Activated T-helper 2 cell treated with anti-CD3 and anti-CD28 coated beads, Interferon-gamma antibody, Interleukin-2, Interleukin-4, amounts not matched to agents 10 μg/mL and 5 μg/mL and 100 μg/mL, durations not matched to agents 14 hours and 24 hours and 36 hours (primary cell): ENCODE measurements at regions of chr17 and their contacts with region 1.

Region 1: DNA sequence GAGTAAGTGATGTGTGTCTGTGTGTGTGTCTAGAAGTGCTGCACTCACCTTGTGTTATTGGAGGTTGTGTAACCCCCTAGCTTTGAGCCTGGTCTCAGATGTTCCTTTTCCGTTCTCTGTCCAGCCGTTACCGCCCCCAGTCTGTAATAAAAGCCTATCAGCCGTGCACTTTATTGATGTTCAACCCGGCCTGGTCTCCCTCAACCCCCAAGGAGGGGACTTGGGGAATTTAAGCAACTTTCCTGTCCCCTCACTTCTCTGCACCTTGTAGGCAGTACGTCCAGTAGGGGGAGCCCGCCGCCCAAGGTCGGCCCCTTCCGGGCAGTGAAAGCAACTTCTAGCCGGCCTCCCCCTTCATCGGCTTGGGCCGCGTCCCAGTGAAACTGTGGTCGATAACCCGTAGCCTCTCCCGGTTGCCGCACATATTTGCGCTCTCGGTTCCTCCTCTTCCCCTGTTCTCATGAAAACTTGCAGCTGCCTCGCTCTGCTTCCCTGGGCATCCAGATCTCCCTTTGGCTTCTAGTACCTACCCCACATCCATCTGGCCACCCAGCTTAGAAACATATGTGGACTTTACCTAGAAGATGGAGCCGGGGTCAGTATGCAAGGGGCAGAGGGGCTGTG is 7.9 kb downstream of the PNPO start:
- DNase-seq: peak; percentile 75
- H3K4me3 Mint-ChIP-seq: peak overlapping the region; percentile 61
- H3K27ac Mint-ChIP-seq: peak overlapping the region; percentile 73
- H3K4me1 Mint-ChIP-seq: peaks cover 30% of the 10 kb centered on the region
- H3K27me3 Mint-ChIP-seq: no peaks in the 10 kb centered on the region

Region 2: DNA sequence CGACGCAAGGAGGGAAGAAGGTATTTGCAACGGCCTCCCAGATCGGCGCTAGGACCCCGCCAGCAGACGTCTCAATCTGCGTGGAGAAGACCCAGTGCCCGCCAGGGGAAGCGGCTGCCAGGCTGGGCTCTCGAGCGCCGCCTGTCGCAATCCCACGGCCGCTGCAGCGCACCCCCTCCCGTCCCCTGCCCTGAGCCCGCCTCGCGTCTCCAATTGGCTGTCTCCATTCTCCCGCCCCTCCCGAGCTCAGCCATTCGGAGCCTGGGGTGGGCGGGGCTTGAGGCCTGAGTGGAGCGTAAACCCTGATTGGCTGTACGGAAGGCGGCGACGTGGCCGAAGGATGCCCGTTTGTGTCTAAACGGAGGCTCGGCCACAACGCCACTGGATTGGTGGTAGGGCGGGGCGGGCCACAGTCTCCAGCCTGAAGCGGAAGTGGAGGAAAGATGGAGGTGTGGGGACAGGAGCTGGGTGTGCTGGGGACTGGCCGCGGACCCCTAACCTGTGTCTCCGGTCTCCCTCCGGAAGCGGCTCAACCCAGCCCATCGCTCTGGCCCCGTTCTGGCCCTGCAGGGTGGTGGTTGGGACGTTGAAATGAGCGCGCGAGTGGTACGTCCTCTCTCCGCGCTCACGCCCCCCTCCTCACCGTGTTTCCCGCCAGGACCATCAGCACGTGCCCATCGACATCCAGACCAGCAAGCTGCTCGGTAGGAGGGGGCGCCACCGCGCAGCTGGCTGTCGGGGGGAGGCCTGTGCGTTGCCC is 21.6 kb after region 1 on chr17 and contains the start of gene CDK5RAP3:
- intact Hi-C with region 1: loop called (anchors 1 kb)
- DNase-seq: peak; percentile 99
- H3K4me3 Mint-ChIP-seq: peak within 1 kb of the TSS; percentile 95
- H3K27ac Mint-ChIP-seq: peak within 1 kb of the TSS; percentile 91
- H3K4me1 Mint-ChIP-seq: peaks cover 28% of the 10 kb centered on the region
- H3K27me3 Mint-ChIP-seq: peaks cover 1% of the 10 kb centered on the region
- total RNA-seq, gene CDK5RAP3: 192 and 199 TPM in 2 replicates